Colonic mucosa (tissue), 4 donors: ENCODE measurements at regions of chr19 and their contacts with region 1.

Region 1: DNA sequence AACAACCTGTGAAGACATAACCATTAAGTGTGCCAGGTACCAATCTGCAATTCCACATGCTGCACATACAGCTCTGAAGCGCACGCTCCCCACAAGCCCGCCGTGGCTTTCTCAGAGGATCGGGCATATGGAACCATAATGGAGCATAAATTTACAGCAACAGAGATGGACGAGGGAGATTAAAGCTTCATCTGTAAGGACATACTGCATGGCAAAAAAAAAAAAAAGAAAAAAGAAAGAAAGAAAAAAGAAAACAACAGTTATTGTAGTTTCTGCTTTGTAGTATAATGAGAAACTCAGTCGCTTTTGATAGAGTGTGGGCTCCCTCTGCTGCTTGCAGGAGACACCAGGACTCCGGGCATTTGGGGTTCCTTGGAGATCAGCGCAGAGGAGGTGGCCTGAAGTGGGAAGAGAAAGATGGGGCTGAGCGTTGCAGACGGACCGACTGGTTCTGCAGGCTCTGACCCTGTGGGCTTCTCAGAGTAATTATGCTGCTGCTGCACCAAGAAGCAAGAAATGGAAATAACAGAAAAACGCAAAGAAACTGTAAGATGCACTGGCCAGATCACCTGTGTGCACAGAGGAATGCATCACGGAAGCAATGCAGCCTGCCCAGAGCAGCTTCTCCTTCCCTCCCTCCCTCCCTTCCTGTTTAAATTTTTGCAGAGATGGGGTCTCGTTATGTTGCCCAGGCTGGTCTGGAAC is 10.8 kb upstream of the PDCD5 start:
- DNase-seq: peak; percentile 47
- H3K4me3 ChIP-seq: no peak overlapping the region
- H3K27ac ChIP-seq: no peak overlapping the region
- H3K4me1 ChIP-seq: no peaks in the 10 kb centered on the region
- H3K27me3 ChIP-seq: no peaks in the 10 kb centered on the region
- CTCF ChIP-seq: peak; percentile 46

Region 2: DNA sequence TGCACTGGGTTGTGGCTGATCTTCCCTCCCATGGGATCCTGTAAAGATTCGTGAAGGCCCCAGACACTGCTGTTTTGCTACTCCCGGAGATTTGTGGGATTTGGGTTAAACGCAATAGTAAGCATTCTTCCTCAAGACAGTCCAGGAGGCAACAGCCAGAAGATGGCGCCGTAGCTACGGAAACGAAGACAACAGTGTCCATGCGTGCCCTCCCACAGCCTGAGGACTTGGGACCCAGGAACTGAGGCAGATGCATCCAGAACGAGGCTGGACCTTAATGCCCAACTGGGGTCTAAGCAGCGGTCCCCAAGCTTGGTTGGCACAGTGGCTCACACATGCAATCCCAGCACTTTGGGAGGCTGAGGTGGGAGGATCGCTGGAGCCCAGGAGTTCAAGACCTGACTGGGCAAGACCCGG is 282.4 kb before region 1 on chr19:
- intact Hi-C with region 1: loop called (anchors 5 kb)
- DNase-seq: peak; percentile 67
- H3K4me3 ChIP-seq: no peak overlapping the region
- H3K27ac ChIP-seq: no peak overlapping the region
- H3K4me1 ChIP-seq: no peaks in the 10 kb centered on the region
- H3K27me3 ChIP-seq: no peaks in the 10 kb centered on the region
- CTCF ChIP-seq: peak; percentile 33

Region 3: DNA sequence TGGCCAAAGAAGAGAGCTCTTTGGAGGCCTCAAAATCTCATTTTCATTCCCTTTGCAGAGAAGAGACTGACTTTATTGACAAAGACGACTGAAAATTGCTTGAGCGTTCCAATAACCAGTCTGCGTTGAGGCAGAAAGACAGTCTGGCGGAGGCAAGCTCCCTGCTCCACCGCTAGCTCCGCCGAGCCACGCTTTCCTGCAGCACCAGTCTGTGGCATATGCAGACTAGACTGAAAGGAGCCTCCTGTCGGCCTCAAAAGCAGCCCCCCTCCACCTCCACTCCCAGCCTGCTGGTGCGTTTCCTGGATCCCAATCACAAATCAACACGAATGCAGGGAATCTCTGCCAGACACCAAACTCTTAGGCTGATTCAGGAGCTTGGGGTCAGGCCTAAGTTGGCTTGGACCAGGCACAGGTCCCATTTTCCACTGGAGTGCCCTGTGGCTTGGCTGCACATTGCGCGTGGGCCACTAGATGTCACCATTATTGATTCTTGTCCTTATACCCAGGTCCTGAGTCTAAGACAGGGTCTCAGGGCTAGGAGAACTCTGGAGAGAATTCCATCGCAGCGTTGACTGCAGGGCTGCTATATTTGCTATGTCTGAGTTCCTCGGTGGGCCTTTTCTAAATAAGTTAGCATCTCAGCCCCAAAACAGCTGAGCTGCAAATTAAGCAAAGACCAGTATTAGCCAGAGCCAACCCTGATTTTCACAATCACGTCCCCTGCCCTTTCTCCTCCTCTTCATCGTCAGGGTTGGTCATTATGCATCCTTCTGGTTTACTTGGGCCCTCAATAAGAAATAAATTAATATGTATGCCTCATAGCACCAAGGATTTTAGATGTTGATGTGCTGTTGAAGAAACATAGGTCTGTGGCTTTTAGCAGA is 230.0 kb before region 1 on chr19:
- intact Hi-C with region 1: loop called (anchors 5 kb)
- DNase-seq: peak; percentile 66
- H3K4me3 ChIP-seq: no peak overlapping the region
- H3K27ac ChIP-seq: no peak overlapping the region
- H3K4me1 ChIP-seq: no peaks in the 10 kb centered on the region
- H3K27me3 ChIP-seq: no peaks in the 10 kb centered on the region
- CTCF ChIP-seq: peak; percentile 73

Region 4: DNA sequence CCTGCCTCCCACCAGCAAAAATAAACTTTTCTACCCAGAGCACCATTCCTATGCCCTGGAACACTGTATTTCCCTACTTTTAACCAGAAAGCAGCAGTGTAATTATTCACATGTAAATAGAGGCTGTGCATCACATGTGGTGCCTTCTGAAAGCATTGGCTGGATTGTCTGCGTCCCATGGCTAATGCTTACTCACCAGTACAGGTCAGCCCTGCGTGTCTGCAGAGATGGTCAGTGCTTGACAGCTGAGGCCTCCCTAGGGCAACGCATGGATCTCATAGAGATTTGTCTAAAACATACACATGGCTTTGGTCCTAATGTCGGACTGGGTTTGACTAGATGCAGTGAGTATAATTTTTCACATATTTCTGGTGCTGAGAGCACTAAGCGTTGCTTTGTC is 100.4 kb before region 1 on chr19:
- intact Hi-C with region 1: loop called (anchors 5 kb)
- DNase-seq: no peak
- H3K4me3 ChIP-seq: no peak overlapping the region
- H3K27ac ChIP-seq: no peak overlapping the region
- H3K4me1 ChIP-seq: no peaks in the 10 kb centered on the region
- H3K27me3 ChIP-seq: no peaks in the 10 kb centered on the region
- CTCF ChIP-seq: no peak

Region 5: GRCh38 chr19:32489971-32490370 is 80.3 kb before region 1 on chr19:
- intact Hi-C with region 1: no loop called
- DNase-seq: no peak
- H3K4me3 ChIP-seq: no peak overlapping the region
- H3K27ac ChIP-seq: no peak overlapping the region
- H3K4me1 ChIP-seq: no peaks in the 10 kb centered on the region
- H3K27me3 ChIP-seq: no peaks in the 10 kb centered on the region
- CTCF ChIP-seq: no peak